K562 (cell line): ENCODE measurements at regions of chr7 and their contacts with region 1.

Region 1: GRCh38 chr7:123748734-123749536 is at the start of gene WASL:
- DNase-seq: peak; percentile 96 to 99 (median 96)
- ATAC-seq: peak; percentile 75
- H3K4me3 ChIP-seq: peak within 1 kb of the TSS; percentile 77
- H3K27ac ChIP-seq: peak within 1 kb of the TSS; percentile 94
- H3K4me1 ChIP-seq: peaks cover 16 to 20% of the 10 kb centered on the region in 2 experiments; a peak in 4 of 5 replicates
- H3K27me3 ChIP-seq: no peaks in the 10 kb centered on the region
- CTCF ChIP-seq: no peak; a peak in 1 of 6 replicates
- EP300 ChIP-seq: peak; percentile 69; the same call in 1 of the 2 replicates
- POLR2A ChIP-seq: peak; percentile 98
- RAD21 ChIP-seq: peak in 1 of 2 experiments; percentile 25; a peak in 1 of 4 replicates
- polyA plus RNA-seq, gene WASL: 3.2 to 4.4 TPM

Region 2: GRCh38 chr7:123534383-123535260 is 214.3 kb before region 1 on chr7 and contains the start of gene IQUB:
- CTCF ChIA-PET with region 1: no interaction called
- POLR2A ChIA-PET with region 1: interaction called, 3 read pairs
- in situ Hi-C with region 1: no loop called
- intact Hi-C with region 1: loop called (anchors 2 kb)
- DNase-seq: peak; percentile 99
- ATAC-seq: peak; percentile 76
- H3K4me3 ChIP-seq: peak within 1 kb of the TSS; percentile 69
- H3K27ac ChIP-seq: peak within 1 kb of the TSS; percentile 86
- H3K4me1 ChIP-seq: peaks cover 9 to 19% of the 10 kb centered on the region in 2 experiments
- H3K27me3 ChIP-seq: no peaks in the 10 kb centered on the region
- CTCF ChIP-seq: no peak
- EP300 ChIP-seq: no peak
- POLR2A ChIP-seq: peak; percentile 93
- RAD21 ChIP-seq: no peak
- polyA plus RNA-seq, gene IQUB: 1.3 to 1.7 TPM

Region 3: DNA sequence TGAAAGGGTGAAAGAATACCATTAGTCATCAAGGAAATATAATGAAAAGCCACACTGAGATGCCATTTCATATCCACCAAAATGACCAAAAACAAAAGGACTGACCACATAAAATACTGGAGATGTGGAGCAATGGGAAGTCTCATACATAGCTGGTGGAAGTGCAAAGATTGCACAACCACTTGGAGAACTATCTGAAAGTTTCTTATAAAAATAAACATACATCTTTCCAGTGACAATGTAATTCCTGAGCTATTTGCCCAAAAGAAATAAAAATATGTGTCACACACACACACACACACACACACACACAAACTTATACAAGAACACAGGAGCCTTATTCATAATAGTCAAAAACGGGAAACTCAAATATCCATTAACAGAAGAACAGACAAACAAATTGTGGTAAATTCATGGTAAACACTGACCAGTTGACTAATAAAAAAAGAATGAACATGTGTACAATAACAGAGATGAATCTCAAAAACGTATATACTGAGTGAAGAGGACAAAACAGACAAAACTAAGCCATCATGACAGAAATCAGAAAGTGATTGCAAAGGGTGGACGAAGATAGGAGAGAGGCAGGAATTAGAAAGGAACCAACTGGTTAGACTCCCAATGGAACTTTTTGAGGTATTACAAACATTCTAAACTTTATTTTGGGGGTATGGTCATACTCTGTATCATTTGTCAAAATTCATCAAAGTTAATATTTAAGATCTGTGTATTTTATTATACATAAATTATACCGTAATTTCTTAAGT is 21.7 kb before region 1 on chr7:
- CTCF ChIA-PET with region 1: no interaction called
- POLR2A ChIA-PET with region 1: interaction called, 13 read pairs
- in situ Hi-C with region 1: no loop called
- intact Hi-C with region 1: loop called (anchors 1 kb)
- DNase-seq: no peak
- ATAC-seq: peak; percentile 57
- H3K4me3 ChIP-seq: 0 out of 2 replicates have a peak overlapping the region, but pooled peaks have one; percentile 1
- H3K27ac ChIP-seq: peak overlapping the region; percentile 57
- H3K4me1 ChIP-seq: peaks cover 9 to 13% of the 10 kb centered on the region in 2 experiments; a peak in 4 of 5 replicates
- H3K27me3 ChIP-seq: no peaks in the 10 kb centered on the region
- CTCF ChIP-seq: no peak
- EP300 ChIP-seq: no peak
- POLR2A ChIP-seq: no peak
- RAD21 ChIP-seq: no peak

Region 4: DNA sequence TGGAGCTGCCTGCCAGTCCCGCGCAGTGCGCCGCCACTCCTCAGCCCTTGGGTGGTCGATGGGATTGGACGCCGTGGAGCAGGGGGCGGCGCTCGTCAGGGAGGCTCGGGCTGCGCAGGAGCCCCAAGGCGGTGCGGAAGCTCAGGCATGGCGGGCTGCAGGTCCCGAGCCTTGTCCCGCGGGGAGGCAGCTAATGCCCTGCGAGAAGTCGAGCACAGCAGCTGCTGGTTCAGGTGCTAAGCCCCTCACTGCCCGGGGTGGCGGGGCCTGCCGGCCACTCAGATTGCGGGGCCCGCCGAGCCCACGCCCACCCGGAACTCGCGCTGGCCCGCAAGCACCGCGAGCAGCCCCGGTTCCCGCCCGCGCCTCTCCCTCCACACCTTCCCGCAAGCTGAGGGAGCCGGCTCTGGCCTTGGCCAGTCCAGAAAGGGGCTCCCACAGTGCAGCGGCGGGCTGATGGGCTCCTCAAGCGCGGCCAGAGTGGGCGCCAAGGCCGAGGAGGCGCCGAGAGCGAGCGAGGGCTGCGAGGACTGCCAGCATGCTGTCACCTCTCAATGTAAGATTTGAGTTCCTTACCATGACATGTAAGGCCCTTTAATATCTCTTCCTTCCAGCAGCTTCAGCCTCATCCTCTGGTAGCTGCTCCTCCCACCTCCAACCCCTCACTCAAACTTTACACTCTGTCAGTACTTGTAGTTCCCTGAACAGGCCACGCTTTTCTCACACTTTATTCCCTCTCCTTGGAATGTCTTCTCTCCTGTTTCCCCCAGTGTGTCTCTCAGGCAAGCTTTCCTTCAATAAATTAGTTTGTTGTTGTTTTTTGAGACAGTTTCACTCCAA is 14.5 kb after region 1 on chr7:
- CTCF ChIA-PET with region 1: no interaction called
- POLR2A ChIA-PET with region 1: interaction called, 17 read pairs
- in situ Hi-C with region 1: no loop called
- intact Hi-C with region 1: loop called (anchors 2 kb)
- DNase-seq: no peak
- ATAC-seq: no peak
- H3K4me3 ChIP-seq: no peak overlapping the region
- H3K27ac ChIP-seq: no peak overlapping the region
- H3K4me1 ChIP-seq: no peaks in the 10 kb centered on the region
- H3K27me3 ChIP-seq: no peaks in the 10 kb centered on the region
- CTCF ChIP-seq: no peak
- EP300 ChIP-seq: no peak
- POLR2A ChIP-seq: no peak
- RAD21 ChIP-seq: no peak

Region 5: GRCh38 chr7:123787220-123788007 is 38.5 kb after region 1 on chr7:
- CTCF ChIA-PET with region 1: no interaction called
- POLR2A ChIA-PET with region 1: interaction called, 5 read pairs
- in situ Hi-C with region 1: no loop called
- intact Hi-C with region 1: loop called (anchors 2 kb)
- DNase-seq: peak in 1 of 4 experiments; percentile 28
- ATAC-seq: peak; percentile 40
- H3K4me3 ChIP-seq: no peak overlapping the region
- H3K27ac ChIP-seq: peak overlapping the region; percentile 9; the same call in 1 of the 3 replicates
- H3K4me1 ChIP-seq: peaks cover 0 to 25% of the 10 kb centered on the region in 2 experiments; a peak in 2 of 5 replicates
- H3K27me3 ChIP-seq: no peaks in the 10 kb centered on the region
- CTCF ChIP-seq: no peak
- EP300 ChIP-seq: no peak
- POLR2A ChIP-seq: no peak
- RAD21 ChIP-seq: no peak